ENCODE measurements at regions of chr5 and their contacts with region 1.

Region 1: GRCh38 chr5:79133657-79134451 is 22.2 kb downstream of the BHMT start:
- DNase-seq: peak; percentile 71
- H3K4me3 ChIP-seq: peak overlapping the region; percentile 48
- H3K27ac ChIP-seq: peak overlapping the region; percentile 80
- H3K27me3 ChIP-seq: peaks cover 5% of the 10 kb centered on the region
- CTCF ChIP-seq: peak; percentile 89

Region 2: GRCh38 chr5:78095125-78095524 is 1038.7 kb before region 1 on chr5:
- CTCF ChIA-PET with region 1: no interaction called
- POLR2A ChIA-PET with region 1: no interaction called
- DNase-seq: no peak
- H3K4me3 ChIP-seq: no peak overlapping the region
- H3K27ac ChIP-seq: no peak overlapping the region
- H3K27me3 ChIP-seq: no peaks in the 10 kb centered on the region
- CTCF ChIP-seq: no peak

Region 3: GRCh38 chr5:78809444-78809843 is 324.4 kb before region 1 on chr5:
- CTCF ChIA-PET with region 1: no interaction called
- POLR2A ChIA-PET with region 1: no interaction called
- DNase-seq: no peak
- H3K4me3 ChIP-seq: no peak overlapping the region
- H3K27ac ChIP-seq: no peak overlapping the region
- H3K27me3 ChIP-seq: no peaks in the 10 kb centered on the region
- CTCF ChIP-seq: no peak

Region 4: GRCh38 chr5:78899922-78900362 is 233.9 kb before region 1 on chr5:
- CTCF ChIA-PET with region 1: interaction called, 10 read pairs
- POLR2A ChIA-PET with region 1: no interaction called
- DNase-seq: no peak
- H3K4me3 ChIP-seq: no peak overlapping the region
- H3K27ac ChIP-seq: no peak overlapping the region
- H3K27me3 ChIP-seq: no peaks in the 10 kb centered on the region
- CTCF ChIP-seq: peak; percentile 77

Region 5: DNA sequence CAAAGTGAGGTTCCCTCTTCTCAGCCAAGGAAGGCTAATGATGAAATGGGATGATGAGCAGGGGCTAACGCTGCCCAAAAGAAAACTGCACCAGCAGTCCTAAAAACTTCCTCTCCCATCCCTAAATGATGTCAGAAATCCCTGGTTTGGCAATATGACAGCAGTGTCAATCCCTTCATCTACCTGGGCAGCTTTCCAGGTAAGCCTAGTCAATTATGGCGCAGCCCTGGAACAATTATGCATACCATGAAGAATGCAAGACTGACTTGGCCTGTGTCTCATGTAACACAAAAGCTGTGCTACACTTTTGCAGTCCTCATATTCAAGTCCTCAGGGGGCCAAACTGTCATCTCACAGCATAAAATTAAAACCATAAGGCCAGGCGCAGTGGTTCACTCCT is 71.4 kb before region 1 on chr5:
- CTCF ChIA-PET with region 1: interaction called, 10 read pairs
- POLR2A ChIA-PET with region 1: no interaction called
- DNase-seq: no peak
- H3K4me3 ChIP-seq: no peak overlapping the region
- H3K27ac ChIP-seq: no peak overlapping the region
- H3K27me3 ChIP-seq: no peaks in the 10 kb centered on the region
- CTCF ChIP-seq: no peak

Region 6: GRCh38 chr5:79151942-79152671 is 18.3 kb after region 1 on chr5:
- CTCF ChIA-PET with region 1: interaction called, 61 read pairs
- POLR2A ChIA-PET with region 1: no interaction called
- DNase-seq: no peak
- H3K4me3 ChIP-seq: no peak overlapping the region
- H3K27ac ChIP-seq: no peak overlapping the region
- H3K27me3 ChIP-seq: peaks cover 4% of the 10 kb centered on the region
- CTCF ChIP-seq: no peak

Region 7: DNA sequence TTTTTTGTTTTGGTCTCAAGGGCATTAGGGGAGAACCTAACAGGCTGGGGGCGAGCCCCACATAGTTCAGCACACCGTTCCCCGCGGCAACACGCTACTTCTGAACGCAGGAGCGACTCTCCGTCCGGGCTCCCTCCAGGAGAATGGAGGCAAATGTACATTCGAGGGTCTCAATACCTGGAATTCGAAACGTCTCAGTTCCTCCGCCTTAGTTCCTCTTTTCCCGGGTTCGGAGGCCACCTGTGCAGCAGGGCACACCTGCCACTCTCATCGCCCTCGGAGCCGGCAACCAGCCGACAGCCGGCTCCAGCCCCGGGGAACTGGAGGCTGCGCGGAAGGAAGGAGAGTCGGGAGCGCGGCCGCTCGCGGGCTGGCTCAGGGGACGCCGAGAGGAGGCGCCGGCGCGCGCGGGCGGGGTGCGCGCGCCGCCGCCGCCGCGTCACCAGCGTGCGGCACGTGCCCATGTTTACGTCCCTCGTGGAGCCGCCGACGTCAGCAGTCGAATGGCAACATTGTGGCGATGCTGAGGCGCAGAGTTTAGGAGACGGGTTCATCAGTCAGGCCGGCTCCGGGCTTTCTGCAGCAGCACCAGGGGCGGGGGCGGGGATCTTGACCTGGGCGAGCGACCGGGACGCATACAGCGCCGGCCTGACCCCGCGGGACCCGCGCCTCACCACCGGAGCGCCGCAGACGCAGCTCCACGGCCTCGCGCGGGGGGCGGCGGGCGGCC is 101.9 kb after region 1 on chr5 and contains the start of gene JMY:
- CTCF ChIA-PET with region 1: interaction called, 12 read pairs
- POLR2A ChIA-PET with region 1: no interaction called
- DNase-seq: peak; percentile 61
- H3K4me3 ChIP-seq: peak within 1 kb of the TSS; percentile 82
- H3K27ac ChIP-seq: peak within 1 kb of the TSS; percentile 77
- H3K27me3 ChIP-seq: no peaks in the 10 kb centered on the region
- CTCF ChIP-seq: 0 out of 2 replicates have a peak, but pooled peaks have one; percentile 15
- polyA plus RNA-seq, gene JMY: 5.8 and 7.2 TPM in 2 replicates

Region 8: GRCh38 chr5:79263290-79263689 is 129.4 kb after region 1 on chr5:
- CTCF ChIA-PET with region 1: no interaction called
- POLR2A ChIA-PET with region 1: no interaction called
- DNase-seq: no peak
- H3K4me3 ChIP-seq: no peak overlapping the region
- H3K27ac ChIP-seq: no peak overlapping the region
- H3K27me3 ChIP-seq: no peaks in the 10 kb centered on the region
- CTCF ChIP-seq: no peak

Region 9: GRCh38 chr5:79297661-79298060 is 163.8 kb after region 1 on chr5:
- CTCF ChIA-PET with region 1: no interaction called
- POLR2A ChIA-PET with region 1: no interaction called
- DNase-seq: no peak
- H3K4me3 ChIP-seq: no peak overlapping the region
- H3K27ac ChIP-seq: no peak overlapping the region
- H3K27me3 ChIP-seq: no peaks in the 10 kb centered on the region
- CTCF ChIP-seq: no peak

Region 10: GRCh38 chr5:79514391-79515105 is 380.7 kb after region 1 on chr5:
- CTCF ChIA-PET with region 1: interaction called, 18 read pairs
- POLR2A ChIA-PET with region 1: no interaction called
- DNase-seq: peak; percentile 79
- H3K4me3 ChIP-seq: peak overlapping the region; percentile 66
- H3K27ac ChIP-seq: peak overlapping the region; percentile 92
- H3K27me3 ChIP-seq: no peaks in the 10 kb centered on the region
- CTCF ChIP-seq: no peak